ENCODE measurements at regions of chr1 and their contacts with region 1.

Region 1: DNA sequence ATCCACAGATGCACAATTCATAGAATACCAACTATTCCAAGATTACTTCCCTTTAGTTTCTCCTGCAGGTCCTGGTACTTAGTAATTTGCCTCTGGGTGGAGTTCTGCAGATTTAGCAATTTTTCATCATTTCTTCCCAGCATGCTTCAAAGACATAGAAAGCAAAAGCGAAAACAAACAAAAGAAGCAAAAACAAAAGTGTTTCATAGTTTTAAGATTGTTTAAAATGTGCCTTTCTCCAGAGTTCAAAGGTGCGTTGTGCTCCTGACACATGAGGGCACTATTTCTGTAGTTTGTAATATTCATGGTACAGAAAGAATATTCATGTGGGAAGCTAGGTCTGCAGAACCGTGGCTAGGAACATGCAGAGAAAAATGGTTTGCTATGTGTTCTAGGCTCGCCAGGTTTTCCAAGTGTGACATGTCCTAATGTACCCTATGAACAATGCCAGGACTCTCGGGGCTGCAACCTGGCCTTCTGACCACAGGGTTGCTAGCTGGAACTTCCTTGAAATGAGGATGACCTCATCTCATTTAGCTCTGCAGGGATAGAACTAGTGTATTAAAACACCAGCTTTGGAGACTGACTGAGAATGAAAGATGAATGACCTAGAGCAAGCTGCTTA is 30.0 kb upstream of the RCSD1 start:
- DNase-seq: peak; percentile 77
- ATAC-seq: peak; percentile 66
- H3K4me3 ChIP-seq: no peak overlapping the region
- H3K4me3 Mint-ChIP-seq: peak overlapping the region; percentile 66
- H3K27ac ChIP-seq: no peak overlapping the region
- H3K27ac Mint-ChIP-seq: peak overlapping the region; percentile 8
- H3K4me1 ChIP-seq: peaks cover 38 to 39% of the 10 kb centered on the region in 2 donors
- H3K4me1 Mint-ChIP-seq: peaks cover 41% of the 10 kb centered on the region
- H3K27me3 ChIP-seq: no peaks in the 10 kb centered on the region
- H3K27me3 Mint-ChIP-seq: no peaks in the 10 kb centered on the region
- CTCF ChIP-seq: peak; percentile 67

Region 2: GRCh38 chr1:167617153-167618147 is 17.4 kb after region 1 on chr1:
- CTCF ChIA-PET with region 1: interaction called, 133 read pairs
- POLR2A ChIA-PET with region 1: interaction called, 44 read pairs
- intact Hi-C with region 1: loop called (anchors 1 kb)
- DNase-seq: peak; percentile 94
- ATAC-seq: peak; percentile 90
- H3K4me3 ChIP-seq: peak overlapping the region; percentile 42 to 81 (median 58)
- H3K4me3 Mint-ChIP-seq: peak overlapping the region; percentile 84
- H3K27ac ChIP-seq: peak overlapping the region; percentile 89 to 97
- H3K27ac Mint-ChIP-seq: peak overlapping the region; percentile 92
- H3K4me1 ChIP-seq: peaks cover 87 to 92% of the 10 kb centered on the region in 2 donors
- H3K4me1 Mint-ChIP-seq: peaks cover 86% of the 10 kb centered on the region
- H3K27me3 ChIP-seq: no peaks in the 10 kb centered on the region
- H3K27me3 Mint-ChIP-seq: no peaks in the 10 kb centered on the region
- CTCF ChIP-seq: no peak

Region 3: DNA sequence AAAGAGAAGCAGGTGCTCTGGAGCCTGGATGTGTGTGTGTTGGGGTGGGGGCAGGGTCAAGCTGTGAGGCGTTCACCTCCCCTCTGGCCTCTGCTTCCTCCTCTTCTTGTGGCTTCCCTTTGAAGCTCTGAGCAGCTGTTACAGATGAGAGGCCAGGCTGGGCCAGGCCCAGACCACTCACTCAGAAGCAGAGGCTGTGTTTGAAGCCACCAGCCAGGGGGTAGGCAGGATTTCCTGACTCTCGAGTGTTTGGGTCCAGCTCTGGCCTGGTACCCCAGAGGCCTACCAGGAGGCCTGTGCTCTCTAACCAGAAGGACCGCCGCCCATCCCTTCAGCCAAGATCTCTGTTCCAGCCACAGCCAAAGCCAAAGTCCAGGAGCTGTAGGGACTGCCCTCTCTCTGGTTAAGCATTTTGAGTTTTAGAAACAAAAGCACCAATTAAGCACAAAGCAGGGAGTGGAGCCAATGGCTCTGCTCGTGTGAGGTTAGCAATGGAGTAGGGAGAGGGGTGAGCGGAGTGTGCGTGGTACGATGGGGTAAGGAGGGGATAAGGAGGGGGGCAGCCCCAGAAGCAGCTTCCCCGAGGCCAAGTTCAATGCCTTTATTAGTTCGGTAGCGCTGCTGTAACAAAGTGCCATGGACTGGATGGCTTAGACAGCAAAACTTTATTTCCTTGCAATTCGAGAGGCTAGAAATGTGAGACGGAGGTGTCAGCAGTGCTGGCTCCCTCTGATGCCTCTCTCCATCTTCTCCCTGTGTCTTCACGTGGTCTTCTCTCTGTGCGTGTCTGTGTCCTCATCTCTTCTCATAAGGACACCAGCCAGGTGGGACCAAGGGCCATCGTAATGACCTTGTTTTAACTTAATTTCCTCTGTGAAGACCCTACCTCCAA is 50.4 kb after region 1 on chr1:
- CTCF ChIA-PET with region 1: interaction called, 52 read pairs
- POLR2A ChIA-PET with region 1: interaction called, 12 read pairs
- intact Hi-C with region 1: loop called (anchors 1 kb)
- DNase-seq: peak; percentile 60
- ATAC-seq: peak; percentile 73
- H3K4me3 ChIP-seq: peak overlapping the region in 3 of 5 experiments; percentile 1 to 16 (median 15)
- H3K4me3 Mint-ChIP-seq: peak overlapping the region; percentile 84
- H3K27ac ChIP-seq: peak overlapping the region; percentile 76 to 83
- H3K27ac Mint-ChIP-seq: peak overlapping the region; percentile 94
- H3K4me1 ChIP-seq: peaks cover 83 to 89% of the 10 kb centered on the region in 2 donors
- H3K4me1 Mint-ChIP-seq: peaks cover 89% of the 10 kb centered on the region
- H3K27me3 ChIP-seq: no peaks in the 10 kb centered on the region
- H3K27me3 Mint-ChIP-seq: no peaks in the 10 kb centered on the region
- CTCF ChIP-seq: no peak

Region 4: DNA sequence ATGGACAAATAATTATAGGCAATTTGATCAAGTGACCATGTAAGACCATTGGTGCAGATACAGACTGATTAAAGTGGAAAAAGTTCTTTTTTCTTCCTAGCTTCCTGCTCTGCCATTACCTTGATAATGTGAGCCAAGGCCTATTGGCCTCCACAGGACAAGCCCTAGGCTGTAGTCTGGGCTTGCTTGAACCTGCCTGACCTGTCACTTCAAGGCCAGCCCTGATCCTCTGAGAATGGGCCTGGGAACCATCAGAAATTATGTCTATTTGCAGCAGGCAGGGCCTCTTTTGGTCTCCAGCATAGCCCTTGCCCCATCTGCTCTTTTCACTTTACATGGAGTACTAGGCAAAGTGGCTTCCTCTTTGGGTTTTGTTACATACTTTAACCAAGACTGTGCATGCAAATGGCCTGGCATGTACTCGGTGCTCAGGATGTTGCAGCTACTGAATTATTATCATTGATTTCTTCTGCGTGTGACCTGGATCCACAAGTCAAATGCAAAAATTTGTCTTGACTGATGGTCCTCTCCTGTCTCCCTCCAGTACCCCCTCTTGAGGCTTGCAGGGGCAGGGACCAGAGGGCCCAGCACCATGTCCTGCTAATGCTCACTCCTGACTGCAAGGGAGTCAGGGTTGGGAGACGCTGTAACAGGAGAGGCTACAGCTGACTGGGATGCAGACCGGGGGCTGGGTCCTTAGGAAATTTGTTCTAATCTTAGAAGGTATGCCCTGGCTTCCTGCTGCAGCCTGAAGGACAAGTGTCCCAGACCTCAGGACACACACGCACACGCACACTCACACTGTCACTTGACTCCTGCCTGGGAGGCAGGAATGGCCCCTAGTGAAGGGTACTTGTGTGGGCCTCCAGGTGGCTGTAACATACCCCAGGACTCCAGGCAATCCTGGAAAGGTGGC is 69.4 kb after region 1 on chr1:
- CTCF ChIA-PET with region 1: interaction called, 77 read pairs
- POLR2A ChIA-PET with region 1: interaction called, 5 read pairs
- intact Hi-C with region 1: no loop called
- DNase-seq: no peak
- ATAC-seq: peak; percentile 24
- H3K4me3 ChIP-seq: no peak overlapping the region
- H3K4me3 Mint-ChIP-seq: peak overlapping the region; percentile 36
- H3K27ac ChIP-seq: peak overlapping the region; percentile 27 to 72
- H3K27ac Mint-ChIP-seq: peak overlapping the region; percentile 47
- H3K4me1 ChIP-seq: peaks cover 76 to 84% of the 10 kb centered on the region in 2 donors
- H3K4me1 Mint-ChIP-seq: peaks cover 97% of the 10 kb centered on the region
- H3K27me3 ChIP-seq: no peaks in the 10 kb centered on the region
- H3K27me3 Mint-ChIP-seq: no peaks in the 10 kb centered on the region
- CTCF ChIP-seq: no peak

Region 5: DNA sequence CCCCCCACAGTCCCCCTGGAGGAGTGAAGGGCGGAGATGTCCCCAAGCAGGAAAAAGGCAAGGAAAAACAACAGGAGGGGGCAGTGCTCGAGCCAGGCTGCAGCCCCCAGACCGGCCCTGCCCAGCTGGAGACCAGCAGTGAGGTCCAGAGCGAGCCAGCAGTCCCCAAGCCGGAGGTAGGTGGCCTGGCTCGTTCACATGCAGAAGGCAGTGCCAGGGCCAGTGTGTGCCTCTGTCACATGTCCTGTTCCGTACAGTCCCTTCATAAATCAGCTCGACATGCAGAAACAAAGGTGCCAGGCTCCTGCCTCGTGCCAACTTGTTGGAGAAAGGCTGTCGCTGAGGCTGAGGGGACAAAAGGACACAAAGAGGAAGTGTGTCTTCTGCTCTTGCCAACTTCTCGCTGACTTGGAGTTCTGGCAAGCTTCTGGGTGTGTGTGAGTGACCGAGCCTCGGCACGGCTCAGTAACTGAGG is 97.6 kb after region 1 on chr1:
- CTCF ChIA-PET with region 1: interaction called, 20 read pairs
- POLR2A ChIA-PET with region 1: interaction called, 4 read pairs
- intact Hi-C with region 1: no loop called
- DNase-seq: no peak
- ATAC-seq: peak; percentile 15
- H3K4me3 ChIP-seq: no peak overlapping the region
- H3K4me3 Mint-ChIP-seq: no peak overlapping the region
- H3K27ac ChIP-seq: no peak overlapping the region
- H3K27ac Mint-ChIP-seq: peak overlapping the region; percentile 20
- H3K4me1 ChIP-seq: no peaks in the 10 kb centered on the region
- H3K4me1 Mint-ChIP-seq: peaks cover 18% of the 10 kb centered on the region
- H3K27me3 ChIP-seq: no peaks in the 10 kb centered on the region
- H3K27me3 Mint-ChIP-seq: no peaks in the 10 kb centered on the region
- CTCF ChIP-seq: no peak

Region 6: GRCh38 chr1:167803358-167804207 is 203.5 kb after region 1 on chr1:
- CTCF ChIA-PET with region 1: interaction called, 11 read pairs
- POLR2A ChIA-PET with region 1: no interaction called
- intact Hi-C with region 1: no loop called
- DNase-seq: peak; percentile 92
- ATAC-seq: peak; percentile 98
- H3K4me3 ChIP-seq: no peak overlapping the region
- H3K4me3 Mint-ChIP-seq: peak overlapping the region; percentile 18
- H3K27ac ChIP-seq: no peak overlapping the region
- H3K27ac Mint-ChIP-seq: peak overlapping the region; percentile 6
- H3K4me1 ChIP-seq: peaks cover 13 to 16% of the 10 kb centered on the region in 2 donors
- H3K4me1 Mint-ChIP-seq: peaks cover 23% of the 10 kb centered on the region
- H3K27me3 ChIP-seq: no peaks in the 10 kb centered on the region
- H3K27me3 Mint-ChIP-seq: no peaks in the 10 kb centered on the region
- CTCF ChIP-seq: peak; percentile 93